CD8-positive, alpha-beta T cell (primary cell): ENCODE measurements at regions of chr11 and their contacts with region 1.

Region 1: DNA sequence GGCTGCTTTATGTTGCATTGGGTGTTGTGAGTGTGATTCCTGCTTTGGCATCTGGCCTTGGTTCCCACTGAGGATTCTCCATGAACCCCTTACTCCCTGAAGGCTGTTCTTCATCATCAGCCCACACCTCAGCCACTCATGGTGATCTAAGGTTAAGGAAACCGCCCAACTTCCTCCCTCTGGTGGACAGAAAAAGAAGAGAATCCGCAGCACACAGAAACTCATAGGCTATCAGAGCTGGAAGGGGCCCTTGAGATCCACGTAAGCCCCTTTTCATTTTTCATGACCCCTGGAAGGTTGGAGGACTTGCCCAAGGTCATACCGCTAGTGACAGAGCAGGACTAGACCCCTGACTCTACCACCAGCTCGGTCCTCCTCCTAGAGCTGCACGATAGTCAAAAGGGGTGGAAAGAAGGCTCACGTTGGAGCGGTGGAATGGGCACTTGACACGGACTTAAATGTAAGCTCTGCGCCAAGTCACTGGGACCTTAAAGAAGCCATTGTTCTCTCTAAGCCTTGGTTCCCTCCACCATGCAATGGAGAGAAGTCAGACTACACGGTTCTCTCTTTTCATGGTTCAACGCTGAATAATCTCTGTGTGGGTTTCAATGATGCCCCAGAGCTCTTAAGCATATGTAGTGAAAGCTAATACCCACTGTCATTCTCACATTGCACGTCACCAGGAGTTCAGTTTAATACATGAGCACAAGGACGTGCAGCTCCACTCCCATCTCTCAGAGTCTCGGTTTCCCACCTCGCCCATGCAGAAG is 83.6 kb upstream of the CRTAM start:
- DNase-seq: peak; percentile 17 to 73 (median 45)
- ATAC-seq: peak; percentile 46
- H3K4me3 ChIP-seq: no peak overlapping the region
- H3K4me3 Mint-ChIP-seq: peak overlapping the region; percentile 11
- H3K27ac ChIP-seq: no peak overlapping the region
- H3K27ac Mint-ChIP-seq: no peak overlapping the region
- H3K4me1 ChIP-seq: peaks cover 36% of the 10 kb centered on the region
- H3K4me1 Mint-ChIP-seq: peaks cover 62% of the 10 kb centered on the region
- H3K27me3 ChIP-seq: no peaks in the 10 kb centered on the region
- H3K27me3 Mint-ChIP-seq: no peaks in the 10 kb centered on the region
- CTCF ChIP-seq: peak; percentile 61

Region 2: GRCh38 chr11:122628810-122629555 is 125.8 kb before region 1 on chr11:
- CTCF ChIA-PET with region 1: interaction called, 517 read pairs
- POLR2A ChIA-PET with region 1: interaction called, 11 read pairs
- intact Hi-C with region 1: loop called (anchors 1 kb)
- DNase-seq: peak; percentile 46 to 81 (median 71)
- ATAC-seq: peak; percentile 93
- H3K4me3 ChIP-seq: no peak overlapping the region
- H3K4me3 Mint-ChIP-seq: no peak overlapping the region
- H3K27ac ChIP-seq: no peak overlapping the region
- H3K27ac Mint-ChIP-seq: no peak overlapping the region
- H3K4me1 ChIP-seq: no peaks in the 10 kb centered on the region
- H3K4me1 Mint-ChIP-seq: peaks cover 20% of the 10 kb centered on the region
- H3K27me3 ChIP-seq: no peaks in the 10 kb centered on the region
- H3K27me3 Mint-ChIP-seq: no peaks in the 10 kb centered on the region
- CTCF ChIP-seq: peak; percentile 75

Region 3: DNA sequence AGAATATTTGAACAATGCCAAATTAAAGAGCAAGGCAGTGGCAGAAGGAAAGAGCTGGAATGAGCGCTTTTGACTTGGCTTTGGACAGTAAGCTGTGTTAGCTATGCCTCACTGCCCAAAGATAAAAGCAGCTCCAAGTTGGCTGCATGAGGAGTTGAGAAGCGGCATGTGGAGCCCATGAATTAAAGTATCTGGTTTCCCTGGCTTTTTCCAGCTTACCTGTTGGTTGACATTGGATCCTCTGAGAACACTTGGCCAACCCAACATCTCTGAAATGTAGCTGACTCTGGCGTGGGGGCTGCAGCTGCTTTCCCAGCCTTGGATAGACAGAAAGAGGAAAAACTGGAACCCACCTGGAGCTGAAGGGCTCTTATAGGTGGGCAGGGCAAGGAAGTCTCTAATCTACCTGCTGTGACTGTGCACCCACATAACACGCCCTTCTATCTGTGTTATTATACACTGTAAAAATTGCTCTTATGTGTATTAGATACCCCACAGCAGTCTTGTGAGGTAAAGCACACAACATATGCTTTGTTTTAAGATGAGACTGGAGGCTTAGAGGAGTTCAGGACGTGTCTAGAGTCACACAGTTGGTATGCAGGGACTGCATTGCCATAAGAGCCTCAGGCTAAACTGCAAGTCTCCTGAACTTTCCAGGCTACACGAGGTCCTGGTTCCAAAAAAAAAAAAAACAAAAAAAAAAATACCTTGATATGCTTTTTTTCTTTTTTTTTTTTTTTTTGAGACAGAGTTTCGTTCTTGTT is 93.4 kb before region 1 on chr11:
- CTCF ChIA-PET with region 1: interaction called, 128 read pairs
- POLR2A ChIA-PET with region 1: interaction called, 29 read pairs
- intact Hi-C with region 1: loop called in 1 of 2 experiments (anchors 1 kb)
- DNase-seq: no peak
- ATAC-seq: no peak
- H3K4me3 ChIP-seq: no peak overlapping the region
- H3K4me3 Mint-ChIP-seq: no peak overlapping the region
- H3K27ac ChIP-seq: no peak overlapping the region
- H3K27ac Mint-ChIP-seq: peak overlapping the region; percentile 28
- H3K4me1 ChIP-seq: peaks cover 72% of the 10 kb centered on the region
- H3K4me1 Mint-ChIP-seq: peaks cover 75% of the 10 kb centered on the region
- H3K27me3 ChIP-seq: no peaks in the 10 kb centered on the region
- H3K27me3 Mint-ChIP-seq: no peaks in the 10 kb centered on the region
- CTCF ChIP-seq: no peak

Region 4: DNA sequence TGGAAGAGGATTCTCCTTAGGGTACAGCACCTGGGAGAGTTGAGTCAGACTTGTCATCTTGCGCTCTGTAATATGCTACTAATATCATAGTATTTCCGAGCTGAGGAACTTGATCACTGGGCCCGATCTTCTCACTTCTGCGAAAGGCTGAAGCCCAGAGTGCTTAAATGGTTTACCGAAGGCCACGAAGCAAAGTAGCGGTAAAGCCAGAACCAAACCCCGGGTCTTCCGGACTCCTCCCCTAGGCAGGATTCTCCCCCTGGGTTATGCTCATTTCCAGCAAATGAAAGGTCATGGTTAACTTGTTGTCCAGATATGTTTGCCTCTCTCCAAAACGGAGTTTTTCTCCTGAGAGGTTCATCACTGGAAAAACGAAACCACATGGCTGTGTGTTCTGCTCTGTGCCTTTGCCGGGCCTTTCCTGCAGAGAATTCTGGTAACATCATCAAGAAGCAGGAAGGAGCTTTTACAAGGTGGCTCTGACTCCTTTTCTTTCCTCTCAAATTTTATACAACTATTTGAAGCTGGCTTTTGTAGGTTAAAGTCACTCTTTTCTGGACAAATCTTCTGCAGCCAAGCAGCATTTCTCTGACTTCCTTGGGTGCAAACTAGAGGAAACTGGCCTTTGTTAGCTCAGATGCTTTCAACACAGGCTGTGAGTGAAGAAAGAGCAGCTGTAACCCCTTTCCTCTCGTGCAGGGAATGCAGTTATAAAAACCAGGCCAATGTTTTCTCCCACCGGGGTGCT is 63.8 kb before region 1 on chr11:
- CTCF ChIA-PET with region 1: interaction called, 69 read pairs
- POLR2A ChIA-PET with region 1: no interaction called
- intact Hi-C with region 1: loop called in 1 of 2 experiments (anchors 2 kb)
- DNase-seq: peak in 2 of 9 experiments; percentile 20 to 56
- ATAC-seq: peak; percentile 60
- H3K4me3 ChIP-seq: peak overlapping the region; percentile 25 to 38
- H3K4me3 Mint-ChIP-seq: peak overlapping the region; percentile 79
- H3K27ac ChIP-seq: peak overlapping the region; percentile 32 to 83
- H3K27ac Mint-ChIP-seq: peak overlapping the region; percentile 91
- H3K4me1 ChIP-seq: peaks cover 65% of the 10 kb centered on the region
- H3K4me1 Mint-ChIP-seq: peaks cover 83% of the 10 kb centered on the region
- H3K27me3 ChIP-seq: no peaks in the 10 kb centered on the region
- H3K27me3 Mint-ChIP-seq: no peaks in the 10 kb centered on the region
- CTCF ChIP-seq: no peak

Region 5: GRCh38 chr11:122727101-122727929 is 27.4 kb before region 1 on chr11:
- CTCF ChIA-PET with region 1: interaction called, 29 read pairs
- POLR2A ChIA-PET with region 1: interaction called, 5 read pairs
- intact Hi-C with region 1: no loop called
- DNase-seq: peak in 8 of 9 experiments; percentile 6 to 67 (median 39)
- ATAC-seq: peak; percentile 74
- H3K4me3 ChIP-seq: peak overlapping the region; percentile 3 to 28
- H3K4me3 Mint-ChIP-seq: peak overlapping the region; percentile 80
- H3K27ac ChIP-seq: peak overlapping the region; percentile 56 to 74
- H3K27ac Mint-ChIP-seq: peak overlapping the region; percentile 98
- H3K4me1 ChIP-seq: peaks cover 66% of the 10 kb centered on the region
- H3K4me1 Mint-ChIP-seq: peaks cover 80% of the 10 kb centered on the region
- H3K27me3 ChIP-seq: no peaks in the 10 kb centered on the region
- H3K27me3 Mint-ChIP-seq: no peaks in the 10 kb centered on the region
- CTCF ChIP-seq: no peak

Region 6: GRCh38 chr11:122765487-122766131 is 10.9 kb after region 1 on chr11:
- CTCF ChIA-PET with region 1: interaction called, 41 read pairs
- POLR2A ChIA-PET with region 1: interaction called, 3 read pairs
- intact Hi-C with region 1: no loop called
- DNase-seq: no peak
- ATAC-seq: no peak
- H3K4me3 ChIP-seq: no peak overlapping the region
- H3K4me3 Mint-ChIP-seq: no peak overlapping the region
- H3K27ac ChIP-seq: no peak overlapping the region
- H3K27ac Mint-ChIP-seq: no peak overlapping the region
- H3K4me1 ChIP-seq: no peaks in the 10 kb centered on the region
- H3K4me1 Mint-ChIP-seq: peaks cover 26% of the 10 kb centered on the region
- H3K27me3 ChIP-seq: no peaks in the 10 kb centered on the region
- H3K27me3 Mint-ChIP-seq: no peaks in the 10 kb centered on the region
- CTCF ChIP-seq: no peak

Region 7: GRCh38 chr11:122788781-122789535 is 34.2 kb after region 1 on chr11:
- CTCF ChIA-PET with region 1: interaction called, 27 read pairs
- POLR2A ChIA-PET with region 1: interaction called, 3 read pairs
- intact Hi-C with region 1: no loop called
- DNase-seq: no peak
- ATAC-seq: no peak
- H3K4me3 ChIP-seq: no peak overlapping the region
- H3K4me3 Mint-ChIP-seq: no peak overlapping the region
- H3K27ac ChIP-seq: no peak overlapping the region
- H3K27ac Mint-ChIP-seq: no peak overlapping the region
- H3K4me1 ChIP-seq: no peaks in the 10 kb centered on the region
- H3K4me1 Mint-ChIP-seq: no peaks in the 10 kb centered on the region
- H3K27me3 ChIP-seq: no peaks in the 10 kb centered on the region
- H3K27me3 Mint-ChIP-seq: no peaks in the 10 kb centered on the region
- CTCF ChIP-seq: no peak